Naive thymus-derived CD4-positive, alpha-beta T cell (primary cell): ENCODE measurements at regions of chr7 and their contacts with region 1.

Region 1: DNA sequence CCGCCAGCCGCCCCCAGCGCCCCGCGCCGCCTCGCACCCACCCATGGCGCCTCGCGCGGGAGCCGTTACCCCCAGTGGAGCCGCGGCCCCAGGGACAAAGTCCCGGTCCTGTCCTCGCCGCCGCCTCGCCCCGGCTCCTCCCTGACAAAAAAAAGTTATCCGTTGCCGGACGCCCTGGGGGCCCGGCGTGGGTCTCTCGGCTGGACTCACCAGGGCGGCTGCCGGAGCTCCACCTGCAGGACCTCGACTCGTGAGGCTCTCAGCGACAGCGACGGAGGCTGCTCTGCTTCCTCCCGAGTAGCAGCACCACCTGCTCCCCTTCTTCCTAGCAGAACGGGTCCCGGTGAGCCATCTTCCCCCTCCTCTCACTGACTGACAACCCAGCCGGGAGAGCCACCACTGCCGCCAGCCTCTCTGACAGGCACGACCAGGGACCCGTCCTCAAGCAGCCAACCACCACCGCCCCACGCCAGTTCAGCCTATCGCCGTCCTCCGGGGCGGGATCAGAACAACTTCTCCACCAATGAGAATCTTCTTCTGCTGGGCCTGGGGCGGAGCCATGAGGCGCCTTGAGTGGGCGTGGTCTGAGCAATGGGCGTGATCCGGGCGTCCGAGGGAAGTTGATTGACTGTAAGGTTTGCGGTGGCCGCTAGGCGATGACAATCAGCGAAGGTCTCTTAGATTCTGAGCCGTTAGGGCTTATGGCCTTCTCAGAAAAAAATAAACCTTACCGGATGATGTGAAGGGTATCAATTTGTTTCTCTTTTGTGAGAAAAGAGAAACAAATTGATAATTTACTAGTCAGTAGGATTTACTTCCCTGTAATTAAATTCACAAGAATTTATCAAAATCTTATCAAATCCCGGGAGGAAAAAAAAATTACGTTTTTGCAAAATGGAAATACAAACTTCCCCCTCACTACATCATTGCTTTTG is at the start of gene HYCC1:
- DNase-seq: peak; percentile 96 to 100 (median 99)
- ATAC-seq: peak; percentile 99
- H3K4me3 ChIP-seq: peak within 1 kb of the TSS; percentile 82
- H3K4me3 Mint-ChIP-seq: peak within 1 kb of the TSS; percentile 8 to 98 (median 96)
- H3K27ac ChIP-seq: peak within 1 kb of the TSS; percentile 67
- H3K27ac Mint-ChIP-seq: peak within 1 kb of the TSS; percentile 60 to 96 (median 88)
- H3K4me1 ChIP-seq: peaks cover 5 to 15% of the 10 kb centered on the region in 2 donors
- H3K4me1 Mint-ChIP-seq: peaks cover 8 to 35% (median 27%) of the 10 kb centered on the region in 7 donors
- H3K27me3 ChIP-seq: no peaks in the 10 kb centered on the region
- H3K27me3 Mint-ChIP-seq: peaks cover 0 to 3% (median 0%) of the 10 kb centered on the region in 5 donors
- total RNA-seq, gene HYCC1: 14.2 to 67.0 (median 18.3) TPM

Region 2: DNA sequence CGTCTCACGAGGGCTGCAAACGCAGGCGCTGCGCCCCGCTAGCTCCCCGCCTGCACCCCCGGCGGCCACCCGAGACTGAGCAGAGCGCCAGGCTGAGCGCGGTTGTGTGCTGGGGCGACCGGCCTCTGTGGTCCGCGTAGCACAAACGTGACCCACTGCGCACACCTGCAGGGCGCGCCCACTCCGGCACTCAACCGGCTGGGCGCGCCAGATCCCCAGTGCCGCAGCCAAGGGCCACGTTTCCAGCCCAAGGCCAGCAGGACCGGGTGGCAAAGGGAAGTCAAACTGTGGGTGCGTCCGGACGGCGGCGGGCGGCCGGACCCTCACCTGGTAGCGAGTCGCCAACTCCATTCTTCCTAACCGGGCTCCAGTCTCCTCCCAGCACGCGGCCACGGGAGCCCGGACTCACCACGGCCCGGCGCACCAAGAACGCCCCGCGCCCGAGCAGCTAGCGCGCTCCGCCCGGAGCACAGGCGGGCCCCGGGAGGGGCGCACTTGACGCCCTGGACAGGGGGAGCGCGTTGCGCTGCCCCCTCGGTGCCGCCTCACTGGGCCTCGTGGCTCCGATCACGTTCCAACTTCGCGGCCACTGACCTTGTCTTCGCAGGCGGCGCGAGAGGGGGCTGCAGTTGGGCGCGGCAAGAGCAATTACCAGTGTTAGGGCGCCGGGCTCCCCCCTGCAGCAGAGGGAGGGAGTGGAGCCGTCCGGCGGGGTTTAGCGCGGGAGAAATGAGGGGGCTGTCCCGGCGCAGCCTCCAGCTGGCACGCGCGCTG is 1068.3 kb before region 1 on chr7 and contains the start of gene CDCA7L:
- CTCF ChIA-PET with region 1: no interaction called
- POLR2A ChIA-PET with region 1: no interaction called
- intact Hi-C with region 1: loop called in 1 of 2 experiments (anchors 10 kb)
- DNase-seq: peak; percentile 40 to 77 (median 66)
- ATAC-seq: peak; percentile 85
- H3K4me3 ChIP-seq: peak within 1 kb of the TSS; percentile 57
- H3K4me3 Mint-ChIP-seq: peak within 1 kb of the TSS; percentile 86 to 95 (median 92)
- H3K27ac ChIP-seq: peak within 1 kb of the TSS; percentile 56
- H3K27ac Mint-ChIP-seq: peak within 1 kb of the TSS; percentile 60 to 87 (median 75)
- H3K4me1 ChIP-seq: peaks cover 0 to 33% of the 10 kb centered on the region in 2 donors
- H3K4me1 Mint-ChIP-seq: peaks cover 29 to 80% (median 62%) of the 10 kb centered on the region in 7 donors
- H3K27me3 ChIP-seq: no peaks in the 10 kb centered on the region
- H3K27me3 Mint-ChIP-seq: peaks cover 0 to 20% (median 0%) of the 10 kb centered on the region in 5 donors
- total RNA-seq, gene CDCA7L: 24.3 to 47.0 (median 41.0) TPM

Region 3: DNA sequence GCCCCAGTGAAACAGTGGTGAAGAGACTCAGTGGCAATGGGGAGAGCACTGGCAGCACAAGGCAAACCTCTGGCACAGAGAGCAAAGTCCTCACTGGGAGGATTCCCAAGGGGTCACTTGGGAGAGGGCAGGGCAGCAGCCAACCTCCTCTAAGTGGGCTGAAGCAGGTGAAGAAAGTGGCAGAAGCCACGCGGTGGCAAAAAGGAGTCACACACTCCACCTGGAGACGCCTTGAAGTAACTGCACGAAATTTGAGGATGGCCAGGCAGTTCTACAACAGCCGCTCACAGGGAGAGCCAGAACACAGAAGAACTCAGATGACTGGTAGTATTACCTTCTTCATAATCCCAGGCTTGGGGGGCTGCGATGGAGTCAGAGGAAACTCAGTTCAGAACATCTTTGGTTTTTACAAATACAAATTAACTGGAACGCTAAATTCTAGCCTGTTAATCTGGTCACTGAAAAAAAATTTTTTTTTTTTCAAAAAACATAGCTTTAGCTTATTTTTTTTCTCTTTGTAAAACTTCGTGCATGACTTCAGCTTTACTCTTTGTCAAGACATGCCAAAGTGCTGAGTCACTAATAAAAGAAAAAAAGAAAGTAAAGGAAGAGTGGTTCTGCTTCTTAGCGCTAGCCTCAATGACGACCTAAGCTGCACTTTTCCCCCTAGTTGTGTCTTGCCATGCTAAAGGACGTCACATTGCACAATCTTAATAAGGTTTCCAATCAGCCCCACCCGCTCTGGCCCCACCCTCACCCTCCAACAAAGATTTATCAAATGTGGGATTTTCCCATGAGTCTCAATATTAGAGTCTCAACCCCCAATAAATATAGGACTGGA is 287.4 kb before region 1 on chr7:
- CTCF ChIA-PET with region 1: no interaction called
- POLR2A ChIA-PET with region 1: no interaction called
- intact Hi-C with region 1: loop called in 1 of 2 experiments (anchors 5 kb)
- DNase-seq: peak; percentile 19 to 67 (median 49)
- ATAC-seq: peak; percentile 84
- H3K4me3 ChIP-seq: no peak overlapping the region
- H3K4me3 Mint-ChIP-seq: peak overlapping the region; percentile 72 to 84 (median 78)
- H3K27ac ChIP-seq: no peak overlapping the region
- H3K27ac Mint-ChIP-seq: peak overlapping the region in 2 of 9 donors; percentile 15 to 41
- H3K4me1 ChIP-seq: peaks cover 0 to 5% of the 10 kb centered on the region in 2 donors
- H3K4me1 Mint-ChIP-seq: peaks cover 7 to 42% (median 21%) of the 10 kb centered on the region in 7 donors
- H3K27me3 ChIP-seq: no peaks in the 10 kb centered on the region
- H3K27me3 Mint-ChIP-seq: peaks cover 0 to 55% (median 4%) of the 10 kb centered on the region in 5 donors

Region 4: GRCh38 chr7:22885797-22886261 is 128.2 kb before region 1 on chr7:
- CTCF ChIA-PET with region 1: no interaction called
- POLR2A ChIA-PET with region 1: no interaction called
- intact Hi-C with region 1: loop called in 1 of 2 experiments (anchors 1 kb)
- DNase-seq: peak in 7 of 9 donors; percentile 5 to 58 (median 47)
- ATAC-seq: peak; percentile 69
- H3K4me3 ChIP-seq: no peak overlapping the region
- H3K4me3 Mint-ChIP-seq: peak overlapping the region in 8 of 10 donors; percentile 19 to 84 (median 36)
- H3K27ac ChIP-seq: peak overlapping the region; percentile 8
- H3K27ac Mint-ChIP-seq: peak overlapping the region in 7 of 9 donors; percentile 19 to 95 (median 67)
- H3K4me1 ChIP-seq: peaks cover 8 to 9% of the 10 kb centered on the region in 2 donors
- H3K4me1 Mint-ChIP-seq: peaks cover 5 to 39% (median 14%) of the 10 kb centered on the region in 7 donors
- H3K27me3 ChIP-seq: no peaks in the 10 kb centered on the region
- H3K27me3 Mint-ChIP-seq: no peaks in the 10 kb centered on the region

Region 5: GRCh38 chr7:23105644-23106056 is 91.7 kb after region 1 on chr7 and contains the start of gene KLHL7:
- CTCF ChIA-PET with region 1: no interaction called
- POLR2A ChIA-PET with region 1: no interaction called
- intact Hi-C with region 1: loop called (anchors 1 kb)
- DNase-seq: peak; percentile 90 to 95 (median 93)
- ATAC-seq: peak; percentile 99
- H3K4me3 ChIP-seq: peak within 1 kb of the TSS; percentile 93
- H3K4me3 Mint-ChIP-seq: peak within 1 kb of the TSS; percentile 90 to 99 (median 96)
- H3K27ac ChIP-seq: peak within 1 kb of the TSS; percentile 90
- H3K27ac Mint-ChIP-seq: peak within 1 kb of the TSS; percentile 91 to 97 (median 96)
- H3K4me1 ChIP-seq: peaks cover 4 to 18% of the 10 kb centered on the region in 2 donors
- H3K4me1 Mint-ChIP-seq: peaks cover 33 to 51% (median 47%) of the 10 kb centered on the region in 7 donors
- H3K27me3 ChIP-seq: no peaks in the 10 kb centered on the region
- H3K27me3 Mint-ChIP-seq: no peaks in the 10 kb centered on the region
- total RNA-seq, gene KLHL7: 16.9 to 22.9 (median 22.7) TPM

Region 6: GRCh38 chr7:23205909-23206767 is 192.2 kb after region 1 on chr7:
- CTCF ChIA-PET with region 1: no interaction called
- POLR2A ChIA-PET with region 1: no interaction called
- intact Hi-C with region 1: no loop called
- DNase-seq: peak in 4 of 9 donors; percentile 10 to 67 (median 27)
- ATAC-seq: peak; percentile 52
- H3K4me3 ChIP-seq: no peak overlapping the region
- H3K4me3 Mint-ChIP-seq: peak overlapping the region in 9 of 10 donors; percentile 26 to 84 (median 58)
- H3K27ac ChIP-seq: peak overlapping the region; percentile 50
- H3K27ac Mint-ChIP-seq: peak overlapping the region in 5 of 9 donors; percentile 32 to 97 (median 34)
- H3K4me1 ChIP-seq: no peaks in the 10 kb centered on the region
- H3K4me1 Mint-ChIP-seq: peaks cover 0 to 9% (median 6%) of the 10 kb centered on the region in 7 donors
- H3K27me3 ChIP-seq: no peaks in the 10 kb centered on the region
- H3K27me3 Mint-ChIP-seq: peaks cover 10 to 47% (median 29%) of the 10 kb centered on the region in 5 donors

Region 7: GRCh38 chr7:23247603-23248335 is 233.8 kb after region 1 on chr7:
- CTCF ChIA-PET with region 1: no interaction called
- POLR2A ChIA-PET with region 1: no interaction called
- intact Hi-C with region 1: no loop called
- DNase-seq: peak in 1 of 9 donors; percentile 9
- ATAC-seq: peak; percentile 78
- H3K4me3 ChIP-seq: no peak overlapping the region
- H3K4me3 Mint-ChIP-seq: peak overlapping the region in 4 of 10 donors; percentile 1 to 61 (median 11)
- H3K27ac ChIP-seq: no peak overlapping the region
- H3K27ac Mint-ChIP-seq: no peak overlapping the region
- H3K4me1 ChIP-seq: no peaks in the 10 kb centered on the region
- H3K4me1 Mint-ChIP-seq: peaks cover 0 to 6% (median 3%) of the 10 kb centered on the region in 7 donors
- H3K27me3 ChIP-seq: peaks cover 0 to 5% of the 10 kb centered on the region in 2 donors
- H3K27me3 Mint-ChIP-seq: peaks cover 69 to 86% (median 77%) of the 10 kb centered on the region in 5 donors

Region 8: DNA sequence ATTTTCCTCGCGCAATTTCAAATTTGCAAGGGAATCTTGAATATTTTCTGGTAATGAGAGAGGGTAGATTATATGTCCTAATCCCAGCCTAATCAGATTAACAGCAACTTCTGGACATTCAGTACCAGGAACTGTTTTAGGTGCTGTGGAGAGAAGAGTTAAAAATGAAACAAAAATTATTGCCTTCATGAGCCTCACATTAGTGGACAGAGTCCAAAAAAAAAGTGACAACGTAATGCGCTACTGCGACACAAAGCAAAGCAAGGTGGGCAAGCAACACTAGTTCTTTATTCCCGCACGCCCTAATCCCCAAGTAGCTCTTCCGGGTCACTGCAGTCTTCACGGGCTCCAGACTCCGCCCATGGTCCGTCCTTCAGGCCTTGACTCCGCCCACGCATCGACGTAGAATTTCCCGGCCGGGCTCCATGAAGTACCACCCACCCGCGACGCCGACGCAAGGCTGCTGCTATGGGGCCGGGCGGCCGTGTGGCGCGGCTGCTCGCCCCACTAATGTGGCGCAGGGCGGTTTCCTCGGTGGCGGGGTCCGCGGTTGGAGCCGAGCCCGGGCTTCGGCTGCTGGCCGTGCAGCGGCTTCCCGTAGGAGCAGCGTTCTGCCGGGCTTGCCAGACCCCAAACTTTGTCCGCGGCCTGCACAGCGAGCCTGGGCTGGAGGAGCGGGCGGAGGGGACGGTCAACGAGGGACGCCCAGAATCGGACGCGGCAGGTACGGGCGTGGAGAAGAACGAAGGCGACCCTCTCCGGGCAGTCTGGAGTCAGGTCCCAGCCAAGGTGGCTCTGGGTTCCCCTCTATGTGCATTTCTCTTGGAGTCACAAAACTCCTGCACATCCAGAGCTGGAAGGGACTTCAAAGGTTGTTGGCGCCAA is 285.1 kb after region 1 on chr7 and contains the start of gene MALSU1:
- CTCF ChIA-PET with region 1: no interaction called
- POLR2A ChIA-PET with region 1: no interaction called
- intact Hi-C with region 1: loop called in 1 of 2 experiments (anchors 2 kb)
- DNase-seq: peak; percentile 90 to 96 (median 94)
- ATAC-seq: peak; percentile 100
- H3K4me3 ChIP-seq: peak within 1 kb of the TSS; percentile 96
- H3K4me3 Mint-ChIP-seq: peak within 1 kb of the TSS; percentile 90 to 97 (median 94)
- H3K27ac ChIP-seq: peak within 1 kb of the TSS; percentile 92
- H3K27ac Mint-ChIP-seq: peak within 1 kb of the TSS; percentile 96 to 100 (median 98)
- H3K4me1 ChIP-seq: peaks cover 14 to 23% of the 10 kb centered on the region in 2 donors
- H3K4me1 Mint-ChIP-seq: peaks cover 34 to 55% (median 48%) of the 10 kb centered on the region in 7 donors
- H3K27me3 ChIP-seq: no peaks in the 10 kb centered on the region
- H3K27me3 Mint-ChIP-seq: peaks cover 0 to 10% (median 0%) of the 10 kb centered on the region in 5 donors
- total RNA-seq, gene MALSU1: 32.7 to 48.3 (median 44.8) TPM

Region 9: DNA sequence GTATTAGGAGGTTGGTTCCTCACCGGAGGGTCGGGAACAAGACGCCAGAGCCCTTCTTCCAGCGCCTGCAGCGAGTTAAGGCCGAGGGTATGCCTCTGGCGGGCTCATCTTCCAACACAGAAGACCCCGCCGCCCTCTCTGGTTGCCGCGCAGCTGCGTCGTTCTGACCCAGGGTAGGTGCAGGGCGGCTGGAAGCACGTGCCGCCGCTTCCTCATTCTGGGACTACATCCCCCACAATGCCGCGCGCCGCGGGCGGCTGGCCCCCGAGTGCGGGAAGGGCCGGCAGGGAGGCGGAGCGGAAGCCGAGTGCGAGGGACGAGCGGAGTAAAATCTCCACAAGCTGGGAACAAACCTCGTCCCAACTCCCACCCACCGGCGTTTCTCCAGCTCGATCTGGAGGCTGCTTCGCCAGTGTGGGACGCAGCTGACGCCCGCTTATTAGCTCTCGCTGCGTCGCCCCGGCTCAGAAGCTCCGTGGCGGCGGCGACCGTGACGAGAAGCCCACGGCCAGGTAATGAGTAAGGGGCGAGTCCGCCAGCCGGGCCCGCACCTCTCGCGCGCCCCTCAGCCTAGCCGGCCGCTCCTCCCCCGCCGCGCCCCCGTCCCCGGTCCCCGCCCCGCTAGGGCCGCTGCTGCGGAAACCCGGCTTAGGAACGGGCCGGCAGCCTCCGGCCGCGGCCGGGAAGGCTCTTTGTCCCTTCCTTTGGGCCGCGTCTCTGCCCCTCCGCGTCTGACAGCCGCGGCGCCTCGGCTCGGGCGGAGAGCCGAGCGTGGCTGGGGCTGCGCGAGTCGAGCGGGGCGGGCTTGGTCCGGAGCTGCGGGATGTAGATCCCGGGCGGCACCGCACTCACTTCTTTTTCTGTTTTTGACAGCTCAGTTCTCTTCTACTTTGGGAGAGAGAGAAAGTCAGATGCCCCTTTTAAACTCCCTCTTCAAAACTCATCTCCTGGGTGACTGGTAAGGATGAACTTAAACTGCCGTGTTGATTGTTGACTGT is 583.4 kb after region 1 on chr7 and contains the start of gene CCDC126:
- CTCF ChIA-PET with region 1: no interaction called
- POLR2A ChIA-PET with region 1: no interaction called
- intact Hi-C with region 1: loop called in 1 of 2 experiments (anchors 5 kb)
- DNase-seq: peak; percentile 64 to 83 (median 76)
- ATAC-seq: peak; percentile 98
- H3K4me3 ChIP-seq: peak within 1 kb of the TSS; percentile 93
- H3K4me3 Mint-ChIP-seq: peak within 1 kb of the TSS; percentile 86 to 98 (median 94)
- H3K27ac ChIP-seq: peak within 1 kb of the TSS; percentile 74
- H3K27ac Mint-ChIP-seq: peak within 1 kb of the TSS; percentile 59 to 86 (median 80)
- H3K4me1 ChIP-seq: peaks cover 9 to 13% of the 10 kb centered on the region in 2 donors
- H3K4me1 Mint-ChIP-seq: peaks cover 34 to 52% (median 39%) of the 10 kb centered on the region in 7 donors
- H3K27me3 ChIP-seq: no peaks in the 10 kb centered on the region
- H3K27me3 Mint-ChIP-seq: peaks cover 0 to 7% (median 4%) of the 10 kb centered on the region in 5 donors
- total RNA-seq, gene CCDC126: 7.0 to 24.7 (median 17.1) TPM